ENCODE measurements at regions of chr17 and their contacts with region 1.

Region 1: GRCh38 chr17:4948931-4949320 is 596 bp upstream of the PFN1 start:
- DNase-seq: peak; percentile 93
- H3K4me3 ChIP-seq: peak overlapping the region; percentile 100
- H3K27ac ChIP-seq: peak overlapping the region; percentile 99
- H3K4me1 ChIP-seq: peaks cover 36% of the 10 kb centered on the region
- H3K27me3 ChIP-seq: no peaks in the 10 kb centered on the region
- CTCF ChIP-seq: no peak

Region 2: GRCh38 chr17:4966844-4967538 is 18.1 kb after region 1 on chr17:
- CTCF ChIA-PET with region 1: no interaction called
- POLR2A ChIA-PET with region 1: interaction called, 4 read pairs
- intact Hi-C with region 1: loop called (anchors 2 kb)
- DNase-seq: peak; percentile 100
- H3K4me3 ChIP-seq: peak overlapping the region; percentile 59
- H3K27ac ChIP-seq: peak overlapping the region; percentile 94
- H3K4me1 ChIP-seq: peaks cover 17% of the 10 kb centered on the region
- H3K27me3 ChIP-seq: no peaks in the 10 kb centered on the region
- CTCF ChIP-seq: no peak

Region 3: GRCh38 chr17:4997302-4998026 is 48.5 kb after region 1 on chr17 and contains the starts of genes INCA1 and KIF1C:
- CTCF ChIA-PET with region 1: no interaction called
- POLR2A ChIA-PET with region 1: no interaction called
- intact Hi-C with region 1: no loop called
- DNase-seq: peak; percentile 92
- H3K4me3 ChIP-seq: peak within 1 kb of the TSS; percentile 93
- H3K27ac ChIP-seq: peak within 1 kb of the TSS; percentile 92
- H3K4me1 ChIP-seq: peaks cover 28% of the 10 kb centered on the region
- H3K27me3 ChIP-seq: no peaks in the 10 kb centered on the region
- CTCF ChIP-seq: no peak
- total RNA-seq, gene INCA1: 0.62 and 0.72 TPM in 2 replicates
- total RNA-seq, gene KIF1C: 92.6 and 95.9 TPM in 2 replicates